Sigmoid colon (tissue), 7 donors: ENCODE measurements at regions of chr3 and their contacts with region 1.

Region 1: GRCh38 chr3:50611464-50612233 is at the start of gene CISH:
- DNase-seq: peak; percentile 97
- H3K4me3 ChIP-seq: peak within 1 kb of the TSS; percentile 47 to 73 (median 63)
- H3K27ac ChIP-seq: peak within 1 kb of the TSS; percentile 78 to 87 (median 82)
- H3K4me1 ChIP-seq: peaks cover 0 to 57% (median 34%) of the 10 kb centered on the region in 4 donors
- H3K27me3 ChIP-seq: no peaks in the 10 kb centered on the region
- CTCF ChIP-seq: peak in 2 of 4 experiments; percentile 9 to 11
- EP300 ChIP-seq: peak in 1 of 4 donors; percentile 16
- POLR2A ChIP-seq: peak; percentile 62 to 75
- total RNA-seq, gene CISH: 2.1 to 17.0 (median 5.3) TPM

Region 2: DNA sequence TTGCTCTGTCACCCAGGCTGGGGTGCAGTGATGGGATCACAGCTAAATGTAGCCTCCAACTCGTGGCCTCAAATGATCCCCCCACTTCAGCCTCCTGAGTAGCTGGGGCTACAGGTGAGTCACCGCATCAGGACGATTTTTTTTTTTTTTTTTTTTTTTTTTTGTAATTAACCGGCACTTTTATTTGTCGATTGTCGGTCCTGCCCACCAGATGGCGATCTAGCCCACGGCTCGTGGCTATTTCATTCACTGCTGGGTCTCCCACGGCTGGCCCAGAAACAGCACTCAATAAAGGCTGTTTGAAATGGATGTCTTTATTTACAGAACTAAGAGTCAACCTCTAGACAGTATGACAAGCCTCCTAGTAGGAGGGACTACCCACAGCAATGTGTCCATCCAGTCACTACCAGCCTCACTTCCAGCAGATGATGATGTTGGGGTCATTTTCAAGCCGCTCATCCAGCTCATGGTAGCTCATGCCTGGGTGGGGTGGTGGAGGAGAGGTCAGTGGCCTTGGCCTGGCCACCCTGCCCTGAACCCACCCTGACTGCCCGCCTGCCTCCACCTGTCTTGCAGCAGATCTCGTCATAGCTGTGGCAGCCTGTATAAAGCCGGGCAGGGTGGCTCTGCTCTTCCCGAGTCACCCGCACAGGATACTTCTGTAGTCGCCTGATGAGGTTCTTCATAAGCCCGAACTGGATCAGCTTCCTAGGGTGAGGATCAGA is 264.3 kb before region 1 on chr3:
- intact Hi-C with region 1: loop called (anchors 5 kb)
- DNase-seq: peak; percentile 83
- H3K4me3 ChIP-seq: no peak overlapping the region
- H3K27ac ChIP-seq: peak overlapping the region in 2 of 4 donors; percentile 39 to 54
- H3K4me1 ChIP-seq: peaks cover 0 to 40% (median 36%) of the 10 kb centered on the region in 4 donors
- H3K27me3 ChIP-seq: no peaks in the 10 kb centered on the region
- CTCF ChIP-seq: peak in 2 of 4 experiments; percentile 40 to 56
- EP300 ChIP-seq: no peak
- POLR2A ChIP-seq: no peak

Region 3: DNA sequence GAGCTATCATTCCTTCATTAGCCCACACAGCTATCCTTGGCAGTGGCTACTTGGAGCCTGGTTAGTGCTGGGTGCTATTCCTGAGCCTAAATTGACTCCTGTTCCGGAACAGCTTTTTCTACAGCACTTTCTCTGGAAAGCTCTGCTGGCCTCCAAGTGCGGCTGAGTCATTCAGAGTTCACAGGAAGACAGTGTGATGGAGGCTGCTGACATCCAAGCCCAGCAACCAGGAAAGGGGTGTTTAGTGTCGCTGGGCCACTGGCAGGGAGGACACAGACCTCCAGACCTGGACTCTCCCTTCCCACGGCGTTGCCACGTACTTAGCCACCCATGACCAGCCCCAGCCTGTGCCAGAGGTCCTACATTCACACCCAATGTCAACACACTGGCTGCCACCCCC is 136.9 kb before region 1 on chr3:
- intact Hi-C with region 1: no loop called
- DNase-seq: no peak
- H3K4me3 ChIP-seq: no peak overlapping the region
- H3K27ac ChIP-seq: no peak overlapping the region
- H3K4me1 ChIP-seq: no peaks in the 10 kb centered on the region
- H3K27me3 ChIP-seq: no peaks in the 10 kb centered on the region
- CTCF ChIP-seq: no peak
- EP300 ChIP-seq: no peak
- POLR2A ChIP-seq: no peak

Region 4: GRCh38 chr3:50568947-50569749 is 42.5 kb before region 1 on chr3 and contains the start of gene HEMK1:
- intact Hi-C with region 1: loop called (anchors 1 kb)
- DNase-seq: peak; percentile 99
- H3K4me3 ChIP-seq: peak within 1 kb of the TSS; percentile 62 to 86 (median 75)
- H3K27ac ChIP-seq: peak within 1 kb of the TSS; percentile 87 to 94 (median 89)
- H3K4me1 ChIP-seq: peaks cover 0 to 45% (median 35%) of the 10 kb centered on the region in 4 donors
- H3K27me3 ChIP-seq: no peaks in the 10 kb centered on the region
- CTCF ChIP-seq: no peak
- EP300 ChIP-seq: peak in 2 of 4 donors; percentile 66 to 89
- POLR2A ChIP-seq: peak; percentile 72 to 81
- total RNA-seq, gene HEMK1: 5.0 to 13.3 (median 7.2) TPM

Region 5: GRCh38 chr3:50648313-50648712 is 36.7 kb after region 1 on chr3:
- intact Hi-C with region 1: no loop called
- DNase-seq: no peak
- H3K4me3 ChIP-seq: no peak overlapping the region
- H3K27ac ChIP-seq: no peak overlapping the region
- H3K4me1 ChIP-seq: peaks cover 0 to 18% (median 12%) of the 10 kb centered on the region in 4 donors
- H3K27me3 ChIP-seq: no peaks in the 10 kb centered on the region
- CTCF ChIP-seq: no peak
- EP300 ChIP-seq: no peak
- POLR2A ChIP-seq: no peak

Region 6: GRCh38 chr3:50885070-50885850 is 273.6 kb after region 1 on chr3:
- intact Hi-C with region 1: loop called (anchors 10 kb)
- DNase-seq: no peak
- H3K4me3 ChIP-seq: no peak overlapping the region
- H3K27ac ChIP-seq: no peak overlapping the region
- H3K4me1 ChIP-seq: no peaks in the 10 kb centered on the region
- H3K27me3 ChIP-seq: no peaks in the 10 kb centered on the region
- CTCF ChIP-seq: peak in 1 of 4 experiments; percentile 20
- EP300 ChIP-seq: no peak
- POLR2A ChIP-seq: no peak

Region 7: DNA sequence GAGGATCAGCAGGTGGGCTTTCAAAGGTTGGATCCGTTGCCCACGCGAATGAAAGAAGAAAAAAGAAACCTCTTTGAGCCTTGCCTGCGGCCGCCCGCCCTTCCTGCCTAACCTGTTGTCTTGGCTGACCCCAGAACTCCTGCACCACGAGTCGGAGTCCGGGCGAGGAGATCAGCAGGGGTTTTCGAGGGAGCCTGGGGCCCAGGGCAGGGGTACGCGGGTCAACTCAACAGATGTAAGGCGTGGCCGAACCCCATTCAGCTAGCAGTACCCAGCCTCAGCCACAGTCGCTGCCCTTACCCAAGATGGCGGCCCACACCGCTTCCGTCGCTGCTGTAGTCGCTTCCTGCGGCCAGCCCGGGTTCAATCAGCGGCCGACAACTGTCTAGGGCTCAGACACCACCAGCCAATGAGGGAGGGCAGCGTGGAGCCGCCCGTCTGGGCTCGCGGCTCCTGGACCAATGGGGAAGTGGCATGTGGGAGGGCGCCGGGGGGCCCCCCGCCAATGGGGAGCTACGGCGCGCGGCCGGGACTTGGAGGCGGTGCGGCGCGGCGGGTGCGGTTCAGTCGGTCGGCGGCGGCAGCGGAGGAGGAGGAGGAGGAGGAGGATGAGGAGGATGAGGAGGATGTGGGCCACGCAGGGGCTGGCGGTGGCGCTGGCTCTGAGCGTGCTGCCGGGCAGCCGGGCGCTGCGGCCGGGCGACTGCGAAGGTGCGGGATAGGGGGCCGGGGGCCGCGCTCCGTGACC is 773.3 kb after region 1 on chr3 and contains the start of gene MANF:
- intact Hi-C with region 1: loop called (anchors 2 kb)
- DNase-seq: peak; percentile 99
- H3K4me3 ChIP-seq: peak within 1 kb of the TSS; percentile 59 to 91 (median 83)
- H3K27ac ChIP-seq: peak within 1 kb of the TSS; percentile 84 to 96 (median 92)
- H3K4me1 ChIP-seq: peaks cover 0 to 42% (median 35%) of the 10 kb centered on the region in 4 donors
- H3K27me3 ChIP-seq: no peaks in the 10 kb centered on the region
- CTCF ChIP-seq: no peak
- EP300 ChIP-seq: no peak
- POLR2A ChIP-seq: peak; percentile 24 to 51
- total RNA-seq, gene MANF: 12.2 to 26.2 (median 20.5) TPM

Region 8: DNA sequence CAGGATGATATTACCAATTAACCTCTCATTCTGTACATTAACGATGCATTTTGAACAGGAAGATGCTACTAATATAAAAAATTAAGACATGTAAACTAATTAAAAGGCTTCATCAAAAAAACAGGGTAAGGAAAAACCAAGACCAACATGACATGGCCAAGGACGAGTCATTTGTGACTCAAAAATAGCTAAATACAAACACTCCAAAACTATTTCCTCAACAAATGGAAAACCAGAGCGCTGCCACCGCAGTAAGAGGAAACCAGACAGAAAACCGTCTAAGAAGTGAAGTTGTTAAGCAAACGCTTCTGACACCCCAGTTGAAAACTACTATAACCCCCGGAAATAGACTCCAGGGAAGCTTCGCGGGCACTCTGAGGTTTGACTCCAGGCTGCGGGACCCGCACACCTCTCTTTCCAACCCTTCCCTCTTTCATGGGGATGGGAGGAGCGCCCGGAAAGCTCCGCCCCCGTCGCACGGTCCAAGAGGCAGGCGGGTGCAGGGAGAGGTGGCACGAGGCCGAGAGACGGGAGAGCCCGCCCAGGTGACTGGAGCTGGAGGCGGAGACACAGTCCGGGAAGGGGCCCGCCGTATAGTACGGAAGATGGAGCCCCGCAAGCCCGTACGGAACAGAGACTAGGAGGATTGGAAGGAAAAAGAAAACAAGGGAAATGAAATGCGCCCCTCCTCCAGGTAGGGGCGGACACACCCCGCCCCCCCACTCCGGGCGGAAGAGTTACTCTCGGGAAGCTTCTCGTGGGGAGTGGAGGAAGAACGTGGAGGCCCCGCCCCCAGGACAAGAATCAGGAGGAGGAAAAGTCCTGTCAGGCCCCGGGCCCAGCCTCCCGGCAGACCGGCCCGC is 887.5 kb after region 1 on chr3:
- intact Hi-C with region 1: loop called (anchors 5 kb)
- DNase-seq: peak; percentile 98
- H3K4me3 ChIP-seq: peak overlapping the region; percentile 59 to 94 (median 92)
- H3K27ac ChIP-seq: peak overlapping the region; percentile 98 to 100 (median 98)
- H3K4me1 ChIP-seq: peaks cover 0 to 20% (median 11%) of the 10 kb centered on the region in 4 donors
- H3K27me3 ChIP-seq: no peaks in the 10 kb centered on the region
- CTCF ChIP-seq: no peak
- EP300 ChIP-seq: no peak
- POLR2A ChIP-seq: peak in 1 of 2 donors; percentile 31